ENCODE measurements at regions of chr5 and their contacts with region 1.

Region 1: DNA sequence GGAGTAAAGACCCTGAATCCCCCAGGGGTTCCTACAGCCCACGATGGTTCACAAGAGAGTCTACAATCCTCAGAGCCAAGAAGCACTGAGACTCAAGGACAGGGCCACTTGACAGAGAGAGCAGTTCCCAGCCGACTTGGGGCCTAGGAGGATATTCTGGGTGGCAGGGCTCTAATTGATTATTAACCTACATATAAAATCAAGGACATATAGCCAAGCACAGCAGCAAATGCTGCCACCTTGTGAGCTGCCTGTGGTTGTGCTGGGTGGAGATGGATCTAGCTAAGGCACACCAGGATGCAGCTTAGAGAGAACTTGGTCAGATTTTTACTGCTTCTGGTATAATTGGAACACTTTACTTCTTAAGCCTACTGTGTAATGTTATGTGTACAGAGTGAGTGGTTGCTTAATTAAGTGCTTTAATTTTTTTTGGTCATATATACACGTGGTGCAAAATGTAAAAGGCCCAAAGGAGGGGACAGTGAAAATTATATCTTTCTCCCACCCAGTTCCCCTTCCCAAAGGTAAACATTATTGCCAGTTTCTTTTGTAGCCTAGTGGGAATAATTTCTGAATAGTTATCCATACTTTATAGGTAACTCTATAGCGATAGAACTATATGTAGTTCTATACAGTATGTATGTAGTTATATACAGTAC is 78.8 kb downstream of the F2RL2 start:
- DNase-seq: peak; percentile 16
- H3K4me3 ChIP-seq: no peak overlapping the region
- H3K27ac ChIP-seq: no peak overlapping the region
- H3K4me1 ChIP-seq: no peaks in the 10 kb centered on the region
- H3K27me3 ChIP-seq: peaks cover 2% of the 10 kb centered on the region
- CTCF ChIP-seq: peak; percentile 49 to 72

Region 2: GRCh38 chr5:75885849-75886598 is 658.4 kb before region 1 on chr5:
- CTCF ChIA-PET with region 1: no interaction called
- dilution Hi-C with region 1: no loop called
- in situ Hi-C with region 1: no loop called
- intact Hi-C with region 1: loop called (anchors 10 kb)
- DNase-seq: no peak
- H3K4me3 ChIP-seq: no peak overlapping the region
- H3K27ac ChIP-seq: no peak overlapping the region
- H3K4me1 ChIP-seq: no peaks in the 10 kb centered on the region
- H3K27me3 ChIP-seq: no peaks in the 10 kb centered on the region
- CTCF ChIP-seq: peak in 1 of 2 donors; percentile 41

Region 3: DNA sequence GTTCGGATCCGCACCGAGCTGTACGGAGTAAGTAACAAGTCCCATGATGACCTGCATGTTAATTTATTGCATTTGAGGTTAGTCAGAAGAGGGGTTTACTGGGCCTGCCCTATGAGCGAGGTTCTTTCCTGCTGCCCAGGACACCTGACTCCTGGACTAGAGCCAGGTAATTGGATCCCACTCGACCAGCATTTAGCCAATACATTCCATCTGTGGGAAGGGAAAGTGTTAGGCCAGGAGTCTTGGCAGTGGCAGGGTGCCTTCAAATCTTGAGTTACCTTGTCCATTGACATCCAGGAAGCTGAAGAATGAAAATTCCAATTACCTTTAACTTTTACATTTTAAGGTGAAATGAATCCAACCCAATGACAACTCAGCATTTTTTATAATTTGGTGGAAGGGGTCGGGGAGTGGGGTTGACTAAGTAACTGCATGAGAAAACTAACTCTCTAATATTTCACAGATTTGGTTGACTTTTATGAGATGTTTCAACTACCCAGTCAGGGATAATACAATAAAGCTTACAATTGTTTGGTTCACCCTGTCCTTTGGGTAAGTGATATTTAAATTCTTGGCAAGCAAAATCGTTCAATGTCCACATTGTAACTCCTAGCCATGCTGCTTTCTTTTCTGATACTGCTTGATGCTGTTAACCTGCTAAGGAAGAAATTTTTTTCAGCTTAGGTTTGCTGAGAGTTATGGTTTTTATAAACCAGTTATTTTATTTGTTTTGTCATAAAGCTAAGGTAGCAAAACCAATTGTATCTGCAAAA is 252.9 kb before region 1 on chr5:
- CTCF ChIA-PET with region 1: no interaction called
- dilution Hi-C with region 1: no loop called
- in situ Hi-C with region 1: no loop called
- intact Hi-C with region 1: no loop called
- DNase-seq: no peak
- H3K4me3 ChIP-seq: no peak overlapping the region
- H3K27ac ChIP-seq: no peak overlapping the region
- H3K4me1 ChIP-seq: peaks cover 11% of the 10 kb centered on the region
- H3K27me3 ChIP-seq: no peaks in the 10 kb centered on the region
- CTCF ChIP-seq: no peak

Region 4: GRCh38 chr5:76337953-76338451 is 206.4 kb before region 1 on chr5:
- CTCF ChIA-PET with region 1: no interaction called
- dilution Hi-C with region 1: no loop called
- in situ Hi-C with region 1: loop called in 1 of 2 experiments (anchors 25 kb)
- intact Hi-C with region 1: loop called (anchors 1 kb)
- DNase-seq: peak; percentile 75
- H3K4me3 ChIP-seq: no peak overlapping the region
- H3K27ac ChIP-seq: no peak overlapping the region
- H3K4me1 ChIP-seq: peaks cover 4% of the 10 kb centered on the region
- H3K27me3 ChIP-seq: no peaks in the 10 kb centered on the region
- CTCF ChIP-seq: peak; percentile 67 to 69